ENCODE measurements at regions of chr20 and their contacts with region 1.

Region 1: DNA sequence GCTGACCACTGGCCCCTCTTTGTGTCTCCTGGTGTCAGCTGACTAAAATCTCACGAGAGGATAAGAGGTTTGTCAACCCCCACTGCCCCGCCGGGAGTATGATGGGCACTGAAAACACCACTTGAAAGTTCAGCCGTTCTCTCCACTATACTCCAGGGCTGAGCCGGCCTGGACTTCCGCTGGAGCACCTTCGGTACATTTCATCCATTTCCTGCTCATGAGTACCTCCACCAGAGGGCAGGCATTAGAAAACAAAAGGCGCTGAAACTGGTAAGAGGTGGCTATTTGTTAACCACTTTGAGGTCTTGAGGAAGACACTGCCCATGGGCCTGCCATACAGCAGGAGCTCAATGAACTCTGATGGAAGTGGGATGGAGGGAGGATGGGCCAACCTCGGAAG is 17.9 kb upstream of the ANKRD60 start:
- DNase-seq: no peak
- H3K27ac ChIP-seq: no peak overlapping the region
- CTCF ChIP-seq: no peak; the same call in 1 of the 2 replicates

Region 2: DNA sequence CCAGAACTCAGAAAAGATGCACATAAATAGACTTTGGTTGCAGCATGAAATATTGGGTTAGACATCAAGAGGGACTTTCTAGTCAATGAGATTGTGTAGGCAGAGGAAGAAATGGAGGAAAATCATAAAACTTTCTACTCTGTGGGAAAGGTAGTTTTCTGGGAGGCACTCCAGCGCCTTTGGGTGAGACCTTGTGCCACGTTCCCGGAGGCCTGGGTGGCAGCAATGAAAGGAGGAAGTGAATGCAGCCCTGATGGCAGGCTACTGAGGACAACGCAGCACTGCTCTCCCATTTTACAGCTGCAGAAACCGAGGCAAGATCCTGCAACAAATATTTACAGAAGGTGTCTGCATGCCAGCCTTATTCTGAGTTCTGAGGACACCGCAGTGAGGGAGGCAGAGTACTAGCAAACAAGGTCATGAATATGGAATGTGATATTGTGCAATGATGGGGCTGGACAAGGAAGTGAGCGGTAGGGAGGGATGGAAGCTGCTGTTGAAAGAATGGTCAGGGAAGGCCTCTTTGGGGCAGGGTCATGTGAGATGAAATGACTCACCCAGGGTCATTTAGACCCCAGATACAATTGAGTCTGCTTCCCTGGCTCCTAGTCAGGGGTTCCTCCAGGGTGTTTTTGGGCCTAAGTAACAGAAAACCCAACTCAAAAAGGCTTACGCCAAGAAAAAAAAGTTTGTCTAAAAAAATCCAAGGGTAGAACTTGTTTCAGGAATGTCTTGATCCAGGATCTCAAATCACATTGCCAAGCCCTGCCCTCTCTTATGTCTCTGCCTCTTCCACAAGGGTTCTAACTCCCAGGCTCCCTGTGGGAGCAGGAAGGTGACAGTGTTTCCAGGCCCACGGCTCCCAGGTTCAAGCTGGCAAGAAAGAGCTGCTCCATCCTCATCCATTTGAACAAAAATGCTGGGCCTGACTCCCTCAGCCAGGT is 1458.0 kb before region 1 on chr20:
- CTCF ChIA-PET with region 1: no interaction called
- POLR2A ChIA-PET with region 1: no interaction called
- DNase-seq: peak; percentile 95
- H3K27ac ChIP-seq: peak overlapping the region; percentile 91
- CTCF ChIP-seq: no peak

Region 3: GRCh38 chr20:58256842-58257241 is 10.5 kb after region 1 on chr20:
- CTCF ChIA-PET with region 1: no interaction called
- POLR2A ChIA-PET with region 1: no interaction called
- DNase-seq: no peak
- H3K27ac ChIP-seq: no peak overlapping the region
- CTCF ChIP-seq: no peak

Region 4: DNA sequence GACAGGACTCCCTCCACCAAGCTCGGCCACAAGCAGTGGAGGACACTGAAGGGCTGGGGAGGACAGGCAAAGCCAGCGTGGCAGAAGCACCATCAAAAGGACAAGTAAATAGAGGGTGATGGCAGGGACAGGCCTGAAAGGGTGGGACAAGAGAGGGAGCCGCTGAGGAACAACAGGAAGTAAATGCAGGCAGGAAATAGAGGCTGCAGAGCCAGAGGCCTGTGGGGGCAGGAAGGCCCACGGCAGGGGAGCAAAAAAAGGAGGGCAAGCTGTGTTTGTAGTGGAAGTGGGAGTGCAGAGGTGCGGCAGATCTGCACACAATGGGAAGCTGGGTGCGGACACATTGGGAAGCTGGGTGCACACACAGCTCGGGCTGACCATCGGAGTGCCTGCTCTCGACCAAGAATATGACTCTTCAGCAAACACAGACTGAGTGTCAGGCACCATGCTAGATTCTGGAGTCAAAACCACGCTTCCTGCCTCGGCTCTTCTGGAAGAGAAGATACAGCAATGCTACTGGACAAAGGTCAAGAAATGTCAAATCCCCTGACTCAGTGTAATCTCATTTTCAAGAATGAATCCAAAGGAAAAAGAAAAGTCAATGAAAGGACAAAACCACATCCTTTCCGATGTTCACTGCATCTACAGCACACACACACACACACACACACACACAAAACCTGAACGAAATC is 22.7 kb after region 1 on chr20:
- CTCF ChIA-PET with region 1: no interaction called
- POLR2A ChIA-PET with region 1: no interaction called
- DNase-seq: no peak
- H3K27ac ChIP-seq: 0 out of 2 replicates have a peak overlapping the region, but pooled peaks have one; percentile 1
- CTCF ChIP-seq: no peak

Region 5: GRCh38 chr20:58312836-58313235 is 66.5 kb after region 1 on chr20:
- CTCF ChIA-PET with region 1: no interaction called
- POLR2A ChIA-PET with region 1: no interaction called
- DNase-seq: peak; percentile 94
- H3K27ac ChIP-seq: peak overlapping the region; percentile 85
- CTCF ChIP-seq: no peak

Region 6: GRCh38 chr20:58359442-58359841 is 113.1 kb after region 1 on chr20:
- CTCF ChIA-PET with region 1: interaction called, 3 read pairs
- POLR2A ChIA-PET with region 1: interaction called, 15 read pairs
- DNase-seq: no peak
- H3K27ac ChIP-seq: no peak overlapping the region
- CTCF ChIP-seq: no peak

Region 7: DNA sequence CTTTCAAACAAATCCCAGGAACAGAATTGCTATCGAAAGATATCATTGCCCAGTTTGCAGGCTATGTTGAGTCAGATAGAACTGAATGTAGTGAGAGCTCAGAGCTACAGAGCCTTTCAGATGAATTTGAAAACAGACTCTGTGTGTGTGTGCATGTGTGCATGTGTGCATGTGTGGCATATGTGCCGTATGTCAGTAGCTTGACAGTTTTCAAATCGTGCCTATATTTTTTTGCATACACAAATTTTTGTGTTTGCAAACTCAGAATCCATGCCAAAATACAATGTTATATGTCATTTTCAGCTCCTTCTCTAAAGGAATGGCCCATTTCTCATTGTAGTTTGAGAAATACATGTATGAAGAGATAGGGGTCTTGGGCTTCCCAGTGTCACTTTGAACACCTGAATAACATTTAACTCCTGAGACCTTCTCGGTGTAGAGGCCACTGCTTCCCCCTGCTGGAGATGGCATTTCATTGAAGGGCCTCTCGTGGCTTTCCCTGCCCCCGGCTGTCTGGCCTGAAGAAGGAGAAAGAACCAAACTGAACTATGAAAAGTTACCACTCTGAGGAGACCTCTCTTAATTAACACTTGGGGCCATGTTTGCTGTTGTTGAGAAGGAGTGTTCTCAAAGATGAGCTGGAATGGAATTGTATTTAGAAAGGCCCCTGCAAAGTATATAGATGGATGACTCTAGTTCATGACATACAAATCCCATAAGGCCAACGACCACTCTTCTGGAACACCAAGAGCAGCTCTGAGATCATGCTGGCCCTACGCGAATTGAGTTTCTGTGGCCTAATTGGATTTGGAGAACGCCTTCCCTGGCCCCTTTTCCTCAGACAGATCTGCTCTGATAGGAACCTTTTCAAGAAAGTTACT is 201.4 kb after region 1 on chr20:
- CTCF ChIA-PET with region 1: interaction called, 13 read pairs
- POLR2A ChIA-PET with region 1: no interaction called
- DNase-seq: peak; percentile 79
- H3K27ac ChIP-seq: no peak overlapping the region
- CTCF ChIP-seq: peak; percentile 72